MCF 10A (cell line): ENCODE measurements at regions of chr4 and their contacts with region 1.

Region 1: DNA sequence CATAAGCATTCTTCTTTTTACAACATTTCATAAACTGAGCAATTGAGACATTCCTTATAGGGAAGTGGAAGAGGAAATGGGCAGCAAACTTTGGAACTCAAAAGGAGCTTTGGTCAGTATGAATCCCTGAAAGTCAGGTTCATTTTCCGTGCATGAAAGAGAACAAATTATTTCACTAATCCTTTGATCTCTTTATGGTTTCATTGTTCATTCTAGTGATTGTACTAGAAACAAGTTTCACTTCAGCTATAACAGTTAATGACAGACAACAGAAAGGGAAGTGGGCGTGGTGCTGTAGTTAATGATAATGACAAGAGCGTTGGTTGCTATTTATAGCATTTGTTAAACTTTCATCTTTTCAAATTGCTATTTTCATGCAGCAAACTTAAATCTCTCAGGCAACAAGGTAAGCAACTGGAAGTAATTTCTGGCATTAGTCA is 98.3 kb downstream of the AREG start:
- DNase-seq: no peak
- H3K4me3 Mint-ChIP-seq: no peak overlapping the region
- H3K27ac Mint-ChIP-seq: no peak overlapping the region
- H3K4me1 Mint-ChIP-seq: peaks cover 12% of the 10 kb centered on the region
- H3K27me3 Mint-ChIP-seq: no peaks in the 10 kb centered on the region
- CTCF ChIP-seq: no peak

Region 2: DNA sequence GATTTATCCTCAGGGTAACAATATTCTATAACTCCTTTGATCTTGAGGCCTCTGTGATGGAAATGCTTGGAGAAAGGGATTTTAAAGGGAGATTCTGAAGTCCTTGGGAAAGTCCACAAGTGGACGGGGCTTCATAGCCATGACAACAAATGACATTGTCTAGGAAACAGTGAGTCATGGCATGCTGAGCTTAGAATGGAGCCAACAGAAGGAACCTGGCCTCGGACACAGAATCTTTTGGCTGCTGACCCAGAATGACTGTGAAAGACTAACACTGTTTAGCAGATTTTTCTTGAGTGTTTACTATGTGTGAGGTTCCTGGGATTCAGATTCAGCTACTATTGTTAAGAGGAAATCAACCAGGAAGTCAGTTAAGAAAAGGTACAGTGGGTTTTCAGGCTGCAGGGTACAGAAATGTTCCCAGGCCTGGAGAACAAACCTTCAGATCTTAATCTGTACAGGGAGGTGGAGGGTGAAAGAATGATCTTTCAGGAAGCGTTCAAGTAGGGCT is 426.2 kb before region 1 on chr4:
- CTCF ChIA-PET with region 1: no interaction called
- POLR2A ChIA-PET with region 1: no interaction called
- intact Hi-C with region 1: loop called (anchors 10 kb)
- DNase-seq: peak; percentile 96
- H3K4me3 Mint-ChIP-seq: peak overlapping the region; percentile 88
- H3K27ac Mint-ChIP-seq: peak overlapping the region; percentile 99
- H3K4me1 Mint-ChIP-seq: peaks cover 44% of the 10 kb centered on the region
- H3K27me3 Mint-ChIP-seq: no peaks in the 10 kb centered on the region
- CTCF ChIP-seq: no peak

Region 3: GRCh38 chr4:74583077-74583693 is 39.9 kb after region 1 on chr4:
- CTCF ChIA-PET with region 1: interaction called, 6 read pairs
- POLR2A ChIA-PET with region 1: interaction called, 21 read pairs
- intact Hi-C with region 1: no loop called
- DNase-seq: peak; percentile 9
- H3K4me3 Mint-ChIP-seq: no peak overlapping the region
- H3K27ac Mint-ChIP-seq: peak overlapping the region; percentile 79
- H3K4me1 Mint-ChIP-seq: peaks cover 23% of the 10 kb centered on the region
- H3K27me3 Mint-ChIP-seq: no peaks in the 10 kb centered on the region
- CTCF ChIP-seq: no peak

Region 4: GRCh38 chr4:74623041-74623440 is 79.8 kb after region 1 on chr4:
- CTCF ChIA-PET with region 1: interaction called, 49 read pairs
- POLR2A ChIA-PET with region 1: interaction called, 5 read pairs
- intact Hi-C with region 1: no loop called
- DNase-seq: peak; percentile 74
- H3K4me3 Mint-ChIP-seq: no peak overlapping the region
- H3K27ac Mint-ChIP-seq: no peak overlapping the region
- H3K4me1 Mint-ChIP-seq: peaks cover 52% of the 10 kb centered on the region
- H3K27me3 Mint-ChIP-seq: no peaks in the 10 kb centered on the region
- CTCF ChIP-seq: peak; percentile 47

Region 5: DNA sequence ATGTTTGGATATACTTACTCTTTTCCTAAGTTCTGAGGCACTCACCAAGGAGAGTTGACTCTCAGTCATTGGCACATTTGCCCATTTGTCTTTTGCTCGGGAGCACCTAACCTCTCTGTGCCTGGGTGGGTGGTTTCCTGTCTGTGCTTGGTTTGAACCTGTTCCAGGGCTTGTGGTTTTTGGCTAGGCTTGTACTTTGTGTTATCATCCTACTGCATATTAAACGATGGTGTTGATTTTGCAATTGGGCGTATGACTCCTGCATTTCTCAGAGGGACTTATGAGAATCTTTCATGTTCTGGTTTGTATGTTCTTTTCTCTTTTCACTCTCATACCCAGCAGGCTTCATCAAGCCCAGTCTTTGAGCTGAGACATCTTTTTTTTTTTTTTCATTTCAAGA is 89.4 kb after region 1 on chr4:
- CTCF ChIA-PET with region 1: interaction called, 3 read pairs
- POLR2A ChIA-PET with region 1: interaction called, 14 read pairs
- intact Hi-C with region 1: no loop called
- DNase-seq: peak; percentile 100
- H3K4me3 Mint-ChIP-seq: peak overlapping the region; percentile 51
- H3K27ac Mint-ChIP-seq: peak overlapping the region; percentile 80
- H3K4me1 Mint-ChIP-seq: peaks cover 33% of the 10 kb centered on the region
- H3K27me3 Mint-ChIP-seq: no peaks in the 10 kb centered on the region
- CTCF ChIP-seq: no peak

Region 6: DNA sequence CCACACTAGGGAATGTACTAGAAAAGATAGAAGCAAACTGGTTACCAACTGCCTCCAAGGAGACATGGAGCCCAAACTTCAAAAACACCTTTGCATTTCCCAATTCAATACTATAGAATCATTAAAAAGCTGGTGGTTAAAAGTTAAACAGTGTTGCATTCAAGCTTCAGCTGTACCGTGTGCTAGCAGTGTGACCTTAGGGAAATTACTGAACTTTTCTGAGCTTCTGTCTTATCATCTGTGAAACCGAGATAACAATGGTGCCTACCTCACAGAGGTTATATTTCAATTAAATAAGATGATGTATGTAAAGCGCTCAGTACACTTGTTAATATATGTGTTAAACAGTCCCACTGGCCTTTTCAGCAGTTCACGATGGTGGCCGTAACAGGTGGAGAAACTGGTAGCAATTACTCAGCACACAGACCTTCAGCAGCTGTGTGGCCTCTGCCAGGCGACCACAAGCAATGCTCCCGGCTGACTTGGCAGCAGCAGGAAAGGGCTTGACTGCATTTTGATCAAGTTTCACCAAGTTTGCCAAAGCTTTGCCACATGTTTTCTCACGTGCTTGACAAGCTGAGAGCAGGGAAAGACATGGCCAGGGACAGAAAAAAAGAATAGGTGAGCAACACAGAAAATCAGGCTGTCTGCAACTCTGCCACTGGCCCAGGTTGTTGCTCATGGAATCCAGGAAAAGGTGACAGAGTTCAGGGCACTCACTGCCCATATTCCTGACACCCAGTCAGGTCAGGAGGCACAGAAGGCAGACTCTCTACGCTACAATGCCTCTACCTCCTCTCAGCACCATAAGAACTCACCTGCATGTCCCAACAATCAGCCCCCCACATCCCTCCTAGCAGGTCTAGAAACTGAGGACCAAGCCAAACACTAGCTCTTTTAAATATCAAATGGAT is 461.8 kb after region 1 on chr4:
- CTCF ChIA-PET with region 1: no interaction called
- POLR2A ChIA-PET with region 1: no interaction called
- intact Hi-C with region 1: no loop called
- DNase-seq: peak; percentile 54
- H3K4me3 Mint-ChIP-seq: no peak overlapping the region
- H3K27ac Mint-ChIP-seq: peak overlapping the region; percentile 14
- H3K4me1 Mint-ChIP-seq: peaks cover 7% of the 10 kb centered on the region
- H3K27me3 Mint-ChIP-seq: no peaks in the 10 kb centered on the region
- CTCF ChIP-seq: no peak